Aorta (tissue), 5 donors: ENCODE measurements at regions of chr19 and their contacts with region 1.

Region 1: GRCh38 chr19:52904052-52904451 is 6.6 kb upstream of the ZNF320 start:
- DNase-seq: no peak
- ATAC-seq: no peak
- H3K4me3 ChIP-seq: no peak overlapping the region
- H3K27ac ChIP-seq: no peak overlapping the region
- H3K4me1 ChIP-seq: no peaks in the 10 kb centered on the region
- H3K27me3 ChIP-seq: no peaks in the 10 kb centered on the region

Region 2: DNA sequence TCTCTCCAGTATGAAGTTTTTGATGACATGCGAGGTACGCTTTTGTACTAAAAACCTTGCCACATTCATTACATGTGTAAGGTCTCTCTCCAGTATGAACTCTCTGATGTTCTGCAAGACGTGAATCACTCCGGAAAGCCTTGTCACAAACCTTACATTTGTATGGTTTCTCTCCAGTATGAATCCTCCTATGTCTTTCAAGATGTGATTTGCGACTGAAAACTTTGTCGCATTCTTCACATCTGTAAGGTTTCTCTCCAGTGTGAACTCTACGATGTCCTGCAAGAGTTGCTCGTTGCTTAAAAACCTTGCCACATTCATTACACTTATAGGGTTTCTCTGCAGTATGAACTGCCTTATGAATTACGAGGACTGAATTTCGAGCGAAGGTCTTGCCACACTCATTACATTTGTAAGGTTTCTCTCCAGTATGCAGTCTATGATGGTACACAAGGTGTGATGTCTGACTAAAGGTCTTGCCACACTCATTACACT is 23.1 kb before region 1 on chr19:
- intact Hi-C with region 1: no loop called
- DNase-seq: no peak
- ATAC-seq: no peak
- H3K4me3 ChIP-seq: no peak overlapping the region
- H3K27ac ChIP-seq: no peak overlapping the region
- H3K4me1 ChIP-seq: no peaks in the 10 kb centered on the region
- H3K27me3 ChIP-seq: no peaks in the 10 kb centered on the region

Region 3: GRCh38 chr19:52987221-52987620 is 83.2 kb after region 1 on chr19:
- intact Hi-C with region 1: loop called in 1 of 2 experiments (anchors 10 kb)
- DNase-seq: no peak
- ATAC-seq: no peak
- H3K4me3 ChIP-seq: no peak overlapping the region
- H3K27ac ChIP-seq: no peak overlapping the region
- H3K4me1 ChIP-seq: peaks cover 0 to 2% of the 10 kb centered on the region in 2 donors
- H3K27me3 ChIP-seq: no peaks in the 10 kb centered on the region